MCF 10A (cell line): ENCODE measurements at regions of chr4 and their contacts with region 1.

Region 1: DNA sequence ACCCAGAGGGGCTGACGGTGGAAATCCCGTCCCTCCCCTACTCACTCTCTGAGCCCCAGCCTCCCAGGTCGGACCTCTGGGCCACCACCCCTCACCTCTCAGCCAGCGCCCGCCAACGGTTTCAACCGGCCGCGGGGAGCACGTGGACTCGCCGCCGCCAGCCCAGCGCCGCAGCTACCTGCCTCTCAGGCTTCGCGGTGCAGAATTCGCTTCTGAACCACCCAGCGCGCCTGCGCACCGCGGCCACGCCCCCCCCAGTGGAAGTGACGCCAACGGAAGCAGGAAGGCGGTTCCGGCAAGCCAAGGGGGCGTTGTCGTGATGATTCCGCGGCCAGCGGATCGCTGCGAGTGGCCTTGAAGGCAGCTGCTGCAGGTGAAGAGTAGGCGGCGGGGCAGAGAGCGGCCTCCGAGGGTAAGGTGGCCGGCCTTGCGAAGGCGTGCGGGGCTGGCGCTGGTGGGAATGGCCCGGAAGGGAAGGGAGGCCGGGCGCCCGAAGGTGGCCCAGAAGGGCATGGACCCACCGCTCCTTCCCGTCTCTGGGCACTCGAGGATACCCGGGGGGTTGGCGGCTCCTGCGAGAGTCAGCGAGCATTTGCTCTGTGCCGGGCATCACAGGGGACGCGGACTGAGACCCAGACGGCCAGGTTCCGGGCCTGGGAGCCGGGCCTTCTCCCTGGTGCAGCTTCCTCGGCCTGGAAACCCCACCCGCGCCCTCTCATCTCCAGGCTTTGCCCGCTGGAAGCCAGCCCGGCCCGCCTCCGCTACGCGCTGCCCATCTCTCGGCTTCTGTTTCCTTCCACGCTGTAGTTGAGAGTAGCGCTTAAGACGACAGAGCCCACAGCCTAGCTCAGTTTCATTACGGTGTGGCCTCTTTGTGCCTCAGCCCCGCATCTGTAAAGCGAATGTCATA is at the starts of genes LYAR and ZBTB49:
- DNase-seq: peak; percentile 92
- H3K4me3 Mint-ChIP-seq: peak within 1 kb of the TSS; percentile 96
- H3K27ac Mint-ChIP-seq: peak within 1 kb of the TSS; percentile 92
- H3K4me1 Mint-ChIP-seq: peaks cover 37% of the 10 kb centered on the region
- H3K27me3 Mint-ChIP-seq: no peaks in the 10 kb centered on the region
- CTCF ChIP-seq: no peak
- total RNA-seq, gene LYAR: 66.7 and 79.6 TPM in 2 replicates
- total RNA-seq, gene ZBTB49: 5.9 and 7.6 TPM in 2 replicates

Region 2: DNA sequence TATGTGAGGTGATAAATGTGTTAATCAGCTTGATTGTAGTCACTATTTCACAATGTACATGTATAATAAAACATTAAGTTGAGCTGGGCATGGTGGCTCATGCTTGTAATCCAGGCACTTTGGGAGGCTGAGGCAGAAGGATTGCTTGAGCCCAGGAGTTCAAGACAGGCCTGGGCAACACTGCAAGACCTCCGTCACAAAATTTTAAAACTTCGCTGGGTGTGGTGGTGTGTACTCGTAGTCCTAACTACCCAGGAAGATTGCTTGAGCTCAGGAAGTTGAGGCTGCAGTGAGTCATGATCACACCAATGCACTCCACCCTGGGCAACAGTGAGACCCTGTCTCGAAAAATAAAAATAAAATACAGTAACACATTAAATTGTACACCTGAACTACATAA is 20.3 kb before region 1 on chr4:
- CTCF ChIA-PET with region 1: interaction called, 5 read pairs
- POLR2A ChIA-PET with region 1: interaction called, 11 read pairs
- intact Hi-C with region 1: no loop called
- DNase-seq: peak; percentile 75
- H3K4me3 Mint-ChIP-seq: no peak overlapping the region
- H3K27ac Mint-ChIP-seq: peak overlapping the region; percentile 96
- H3K4me1 Mint-ChIP-seq: peaks cover 53% of the 10 kb centered on the region
- H3K27me3 Mint-ChIP-seq: no peaks in the 10 kb centered on the region
- CTCF ChIP-seq: no peak

Region 3: GRCh38 chr4:4524364-4524763 is 234.2 kb after region 1 on chr4:
- CTCF ChIA-PET with region 1: no interaction called
- POLR2A ChIA-PET with region 1: no interaction called
- intact Hi-C with region 1: no loop called
- DNase-seq: no peak
- H3K4me3 Mint-ChIP-seq: no peak overlapping the region
- H3K27ac Mint-ChIP-seq: no peak overlapping the region
- H3K4me1 Mint-ChIP-seq: no peaks in the 10 kb centered on the region
- H3K27me3 Mint-ChIP-seq: no peaks in the 10 kb centered on the region
- CTCF ChIP-seq: no peak

Region 4: GRCh38 chr4:5186271-5187064 is 896.3 kb after region 1 on chr4:
- CTCF ChIA-PET with region 1: no interaction called
- POLR2A ChIA-PET with region 1: no interaction called
- intact Hi-C with region 1: no loop called
- DNase-seq: no peak
- H3K4me3 Mint-ChIP-seq: no peak overlapping the region
- H3K27ac Mint-ChIP-seq: no peak overlapping the region
- H3K4me1 Mint-ChIP-seq: no peaks in the 10 kb centered on the region
- H3K27me3 Mint-ChIP-seq: no peaks in the 10 kb centered on the region
- CTCF ChIP-seq: no peak